Activated B cell treated with CpG ODN at 0.5 μM for 24 hours (primary cell): ENCODE measurements at regions of chr15 and their contacts with region 1.

Region 1: GRCh38 chr15:29269485-29270168 is at the start of gene NSMCE3:
- DNase-seq: peak; percentile 93
- ATAC-seq: peak; percentile 91
- H3K4me3 Mint-ChIP-seq: peak within 1 kb of the TSS; percentile 86
- H3K27ac Mint-ChIP-seq: peak within 1 kb of the TSS; percentile 95
- H3K4me1 Mint-ChIP-seq: peaks cover 53% of the 10 kb centered on the region
- H3K27me3 Mint-ChIP-seq: no peaks in the 10 kb centered on the region
- CTCF ChIP-seq: no peak
- total RNA-seq, gene NSMCE3: 10.1 and 10.4 TPM in 2 replicates

Region 2: GRCh38 chr15:28098766-28099554 is 1170.7 kb before region 1 on chr15 and contains the start of gene OCA2:
- CTCF ChIA-PET with region 1: no interaction called
- POLR2A ChIA-PET with region 1: no interaction called
- intact Hi-C with region 1: loop called (anchors 5 kb)
- DNase-seq: peak; percentile 47
- ATAC-seq: no peak
- H3K4me3 Mint-ChIP-seq: peak within 1 kb of the TSS; percentile 53
- H3K27ac Mint-ChIP-seq: no peak within 1 kb of the TSS
- H3K4me1 Mint-ChIP-seq: peaks cover 37% of the 10 kb centered on the region
- H3K27me3 Mint-ChIP-seq: peaks cover 52% of the 10 kb centered on the region
- CTCF ChIP-seq: no peak
- total RNA-seq, gene OCA2: not detected in 2 replicates

Region 3: DNA sequence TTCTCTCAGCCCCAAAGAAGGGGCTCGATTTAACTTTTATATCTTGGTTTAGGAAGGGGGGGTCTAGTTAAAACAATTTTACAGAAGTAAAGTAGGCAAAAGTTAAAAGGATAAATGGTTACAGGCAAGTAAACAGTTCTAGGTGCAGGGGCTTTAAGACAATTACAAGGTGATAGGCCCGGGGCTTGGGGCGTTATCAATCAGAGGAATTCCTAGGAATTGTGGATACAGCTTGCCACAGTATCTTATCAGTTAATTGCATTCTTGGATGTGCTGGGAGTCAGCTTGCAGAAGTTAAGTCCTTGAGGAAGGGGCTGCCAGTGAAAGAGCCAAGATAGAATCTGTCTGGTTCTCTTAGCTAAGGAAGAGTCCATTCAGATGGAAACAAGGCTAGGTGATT is 52.7 kb before region 1 on chr15:
- CTCF ChIA-PET with region 1: no interaction called
- POLR2A ChIA-PET with region 1: no interaction called
- intact Hi-C with region 1: loop called (anchors 10 kb)
- DNase-seq: no peak
- ATAC-seq: no peak
- H3K4me3 Mint-ChIP-seq: no peak overlapping the region
- H3K27ac Mint-ChIP-seq: no peak overlapping the region
- H3K4me1 Mint-ChIP-seq: no peaks in the 10 kb centered on the region
- H3K27me3 Mint-ChIP-seq: peaks cover 7% of the 10 kb centered on the region
- CTCF ChIP-seq: no peak

Region 4: DNA sequence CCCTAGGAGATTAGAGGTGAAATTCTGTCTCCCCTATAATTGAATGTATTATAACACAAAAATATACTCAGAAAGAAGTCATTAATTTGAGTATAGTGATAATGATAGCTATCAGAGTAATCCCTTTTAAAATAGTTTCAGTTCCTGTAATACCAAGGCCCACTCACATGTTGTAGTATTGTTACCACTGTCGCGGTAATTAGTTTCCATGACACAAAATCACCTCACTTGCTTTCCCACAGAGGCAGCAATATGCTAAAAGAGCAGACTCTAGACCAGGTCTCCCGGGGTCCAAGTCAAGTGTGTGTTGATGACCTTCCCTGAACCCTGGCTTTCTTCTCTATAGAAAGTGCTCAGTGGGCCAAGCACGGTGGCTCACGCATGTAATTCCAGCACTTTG is 39.5 kb after region 1 on chr15:
- CTCF ChIA-PET with region 1: no interaction called
- POLR2A ChIA-PET with region 1: no interaction called
- intact Hi-C with region 1: loop called (anchors 1 kb)
- DNase-seq: no peak
- ATAC-seq: peak; percentile 70
- H3K4me3 Mint-ChIP-seq: no peak overlapping the region
- H3K27ac Mint-ChIP-seq: peak overlapping the region; percentile 20
- H3K4me1 Mint-ChIP-seq: peaks cover 24% of the 10 kb centered on the region
- H3K27me3 Mint-ChIP-seq: peaks cover 5% of the 10 kb centered on the region
- CTCF ChIP-seq: no peak

Region 5: DNA sequence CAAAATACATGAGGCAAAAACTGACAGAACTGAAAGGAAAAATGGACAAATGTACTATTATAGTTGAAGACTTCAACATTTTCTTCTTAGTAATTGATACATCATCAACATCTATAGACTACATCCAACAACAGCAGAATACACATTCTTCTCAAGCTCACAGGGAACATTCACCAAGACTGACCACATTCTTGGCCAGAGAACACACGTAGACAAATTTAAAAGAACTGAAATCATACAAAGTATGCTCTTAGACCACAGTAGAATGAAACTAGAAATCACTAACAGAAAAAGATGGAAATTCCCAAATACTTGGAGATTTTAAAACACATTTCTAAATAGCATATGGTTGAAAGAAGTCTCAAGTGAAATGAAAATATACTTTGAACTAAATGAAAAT is 55.1 kb after region 1 on chr15:
- CTCF ChIA-PET with region 1: no interaction called
- POLR2A ChIA-PET with region 1: interaction called, 3 read pairs
- intact Hi-C with region 1: loop called (anchors 1 kb)
- DNase-seq: no peak
- ATAC-seq: no peak
- H3K4me3 Mint-ChIP-seq: no peak overlapping the region
- H3K27ac Mint-ChIP-seq: no peak overlapping the region
- H3K4me1 Mint-ChIP-seq: peaks cover 24% of the 10 kb centered on the region
- H3K27me3 Mint-ChIP-seq: no peaks in the 10 kb centered on the region
- CTCF ChIP-seq: no peak